IMR-90 (cell line): ENCODE measurements at regions of chr17 and their contacts with region 1.

Region 1: DNA sequence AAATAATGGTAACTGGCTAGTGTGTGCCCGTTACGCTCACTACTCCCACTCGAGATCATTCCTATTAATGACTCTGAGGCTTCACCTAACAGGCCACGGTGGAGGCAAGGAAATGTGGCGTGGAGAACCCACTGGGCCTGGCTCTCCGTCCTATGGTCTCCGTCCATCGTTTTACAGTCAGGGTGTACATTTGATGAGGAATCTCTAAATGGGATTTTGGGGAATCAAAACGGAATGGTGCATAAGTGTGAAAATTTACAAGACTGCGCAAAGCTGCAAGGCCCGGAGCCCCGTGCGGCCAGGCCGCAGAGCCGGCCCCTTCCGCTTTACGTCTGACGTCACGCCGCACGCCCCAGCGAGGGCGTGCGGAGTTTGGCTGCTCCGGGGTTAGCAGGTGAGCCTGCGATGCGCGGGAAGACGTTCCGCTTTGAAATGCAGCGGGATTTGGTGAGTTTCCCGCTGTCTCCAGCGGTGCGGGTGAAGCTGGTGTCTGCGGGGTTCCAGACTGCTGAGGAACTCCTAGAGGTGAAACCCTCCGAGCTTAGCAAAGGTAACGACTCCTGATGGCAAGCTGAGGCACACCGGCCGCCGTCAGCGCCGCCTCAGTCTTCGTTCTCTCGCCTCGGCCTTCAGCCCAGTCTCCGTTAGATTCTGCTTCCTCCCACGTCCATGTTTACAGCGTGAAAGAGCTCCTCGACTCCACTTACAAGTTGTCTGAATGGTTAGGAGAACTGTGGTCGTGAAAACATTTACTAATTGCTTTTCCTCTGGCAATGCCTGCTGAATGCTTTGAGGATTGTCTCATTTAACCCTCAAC is at the start of gene RAD51C:
- DNase-seq: peak; percentile 83
- ATAC-seq: peak; percentile 99
- H3K4me3 ChIP-seq: peak within 1 kb of the TSS; percentile 93
- H3K27ac ChIP-seq: peak within 1 kb of the TSS; percentile 67
- H3K4me1 ChIP-seq: peaks cover 3% of the 10 kb centered on the region
- H3K27me3 ChIP-seq: no peaks in the 10 kb centered on the region
- CTCF ChIP-seq: no peak
- POLR2A ChIP-seq: peak; percentile 26; the same call in 1 of the 2 replicates
- RAD21 ChIP-seq: no peak
- total RNA-seq, gene RAD51C: 21.1 and 28.6 TPM in 2 replicates

Region 2: DNA sequence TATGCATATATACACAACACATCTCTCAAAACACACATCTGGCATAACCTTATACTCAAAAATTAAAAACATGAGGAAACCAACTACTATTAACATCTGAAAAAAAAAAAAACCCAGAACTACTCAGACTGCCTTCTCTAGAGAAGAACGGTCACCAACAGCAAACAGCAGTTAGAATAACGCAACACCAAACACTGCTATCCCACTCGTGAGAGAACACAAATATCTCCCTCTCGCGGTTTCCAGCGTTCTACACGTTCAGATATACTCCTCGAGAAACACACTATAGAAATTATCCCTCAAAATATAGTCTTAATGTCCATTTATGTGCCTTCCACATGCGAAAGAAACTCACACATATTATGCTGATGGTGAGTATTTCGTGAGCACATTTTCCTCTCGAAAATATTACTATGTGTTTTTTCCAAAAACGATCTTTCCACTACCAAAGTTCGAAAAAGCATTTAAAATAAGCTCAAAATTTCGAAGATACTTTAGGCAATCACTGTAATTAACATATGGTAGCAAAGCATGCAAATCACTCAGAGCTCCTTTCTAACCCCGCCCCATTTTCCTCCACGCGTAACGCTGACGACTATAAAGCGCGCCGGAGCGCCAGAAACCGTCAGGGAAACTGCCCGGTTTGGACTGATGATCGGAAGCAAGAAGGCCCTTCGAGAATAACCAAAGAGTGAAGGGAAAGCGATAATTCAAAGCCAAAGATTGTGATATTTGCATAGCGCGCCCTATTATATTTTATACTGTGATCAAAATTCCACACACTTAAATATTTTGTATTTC is 60.7 kb before region 1 on chr17:
- CTCF ChIA-PET with region 1: no interaction called
- POLR2A ChIA-PET with region 1: no interaction called
- dilution Hi-C with region 1: no loop called
- in situ Hi-C with region 1: no loop called
- intact Hi-C with region 1: loop called (anchors 2 kb)
- DNase-seq: peak; percentile 99
- ATAC-seq: peak; percentile 94
- H3K4me3 ChIP-seq: peak overlapping the region; percentile 42; the same call in 1 of the 2 replicates
- H3K27ac ChIP-seq: peak overlapping the region; percentile 68; the same call in 1 of the 2 replicates
- H3K4me1 ChIP-seq: no peaks in the 10 kb centered on the region
- H3K27me3 ChIP-seq: no peaks in the 10 kb centered on the region
- CTCF ChIP-seq: 0 out of 2 replicates have a peak, but pooled peaks have one; percentile 22
- POLR2A ChIP-seq: peak; percentile 100
- RAD21 ChIP-seq: no peak

Region 3: GRCh38 chr17:58808645-58809563 is 116.5 kb after region 1 on chr17:
- CTCF ChIA-PET with region 1: no interaction called
- POLR2A ChIA-PET with region 1: interaction called, 15 read pairs
- dilution Hi-C with region 1: no loop called
- in situ Hi-C with region 1: no loop called
- intact Hi-C with region 1: no loop called
- DNase-seq: no peak
- ATAC-seq: no peak
- H3K4me3 ChIP-seq: no peak overlapping the region
- H3K27ac ChIP-seq: no peak overlapping the region
- H3K4me1 ChIP-seq: no peaks in the 10 kb centered on the region
- H3K27me3 ChIP-seq: no peaks in the 10 kb centered on the region
- CTCF ChIP-seq: no peak
- POLR2A ChIP-seq: no peak
- RAD21 ChIP-seq: no peak